ENCODE measurements at regions of chr3 and their contacts with region 1.

Region 1: GRCh38 chr3:3170998-3171397 is 8.5 kb downstream of the CRBN start:
- DNase-seq: peak; percentile 29
- H3K4me3 Mint-ChIP-seq: no peak overlapping the region
- H3K27ac Mint-ChIP-seq: peak overlapping the region; percentile 93
- H3K4me1 Mint-ChIP-seq: peaks cover 60% of the 10 kb centered on the region
- H3K27me3 Mint-ChIP-seq: no peaks in the 10 kb centered on the region

Region 2: GRCh38 chr3:2765002-2765579 is 405.9 kb before region 1 on chr3:
- CTCF ChIA-PET with region 1: no interaction called
- intact Hi-C with region 1: loop called (anchors 1 kb)
- DNase-seq: peak; percentile 34
- H3K4me3 Mint-ChIP-seq: no peak overlapping the region
- H3K27ac Mint-ChIP-seq: no peak overlapping the region
- H3K4me1 Mint-ChIP-seq: no peaks in the 10 kb centered on the region
- H3K27me3 Mint-ChIP-seq: peaks cover 2% of the 10 kb centered on the region

Region 3: DNA sequence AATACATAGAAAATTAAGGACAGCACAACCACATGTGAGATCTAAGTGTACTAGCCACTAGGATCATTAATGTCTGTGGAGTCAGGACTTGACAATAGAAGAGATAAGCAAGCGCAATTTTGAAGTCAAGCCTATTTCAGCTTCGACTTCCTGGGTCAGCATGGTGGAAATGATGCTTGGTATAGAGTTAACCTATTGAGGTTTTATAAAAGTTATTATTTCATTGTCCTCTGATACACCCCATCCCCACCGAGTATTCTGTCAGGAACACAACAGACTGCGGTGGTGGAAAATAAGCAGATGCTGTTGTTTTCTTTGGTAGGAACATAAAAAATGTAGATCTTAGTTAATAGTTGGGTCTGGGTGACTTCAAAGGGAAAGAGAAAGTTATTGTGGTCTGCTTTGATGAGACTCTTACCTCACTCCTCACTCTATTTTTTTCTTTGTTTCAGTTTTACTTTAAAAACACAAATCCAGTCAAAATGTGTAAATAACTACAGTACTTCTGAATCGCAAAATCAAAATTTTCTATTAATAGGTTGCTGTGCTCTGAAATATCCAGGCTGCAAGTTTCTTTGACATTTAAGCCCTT is 142.9 kb before region 1 on chr3:
- CTCF ChIA-PET with region 1: no interaction called
- intact Hi-C with region 1: loop called (anchors 2 kb)
- DNase-seq: no peak
- H3K4me3 Mint-ChIP-seq: no peak overlapping the region
- H3K27ac Mint-ChIP-seq: no peak overlapping the region
- H3K4me1 Mint-ChIP-seq: peaks cover 11% of the 10 kb centered on the region
- H3K27me3 Mint-ChIP-seq: no peaks in the 10 kb centered on the region

Region 4: GRCh38 chr3:3126477-3127431 is 44.2 kb before region 1 on chr3 and contains the start of gene TRNT1:
- CTCF ChIA-PET with region 1: interaction called, 3 read pairs
- intact Hi-C with region 1: loop called (anchors 1 kb)
- DNase-seq: peak; percentile 96
- H3K4me3 Mint-ChIP-seq: peak within 1 kb of the TSS; percentile 97
- H3K27ac Mint-ChIP-seq: peak within 1 kb of the TSS; percentile 98
- H3K4me1 Mint-ChIP-seq: peaks cover 36% of the 10 kb centered on the region
- H3K27me3 Mint-ChIP-seq: no peaks in the 10 kb centered on the region
- total RNA-seq, gene TRNT1: 42.3 to 49.4 TPM

Region 5: DNA sequence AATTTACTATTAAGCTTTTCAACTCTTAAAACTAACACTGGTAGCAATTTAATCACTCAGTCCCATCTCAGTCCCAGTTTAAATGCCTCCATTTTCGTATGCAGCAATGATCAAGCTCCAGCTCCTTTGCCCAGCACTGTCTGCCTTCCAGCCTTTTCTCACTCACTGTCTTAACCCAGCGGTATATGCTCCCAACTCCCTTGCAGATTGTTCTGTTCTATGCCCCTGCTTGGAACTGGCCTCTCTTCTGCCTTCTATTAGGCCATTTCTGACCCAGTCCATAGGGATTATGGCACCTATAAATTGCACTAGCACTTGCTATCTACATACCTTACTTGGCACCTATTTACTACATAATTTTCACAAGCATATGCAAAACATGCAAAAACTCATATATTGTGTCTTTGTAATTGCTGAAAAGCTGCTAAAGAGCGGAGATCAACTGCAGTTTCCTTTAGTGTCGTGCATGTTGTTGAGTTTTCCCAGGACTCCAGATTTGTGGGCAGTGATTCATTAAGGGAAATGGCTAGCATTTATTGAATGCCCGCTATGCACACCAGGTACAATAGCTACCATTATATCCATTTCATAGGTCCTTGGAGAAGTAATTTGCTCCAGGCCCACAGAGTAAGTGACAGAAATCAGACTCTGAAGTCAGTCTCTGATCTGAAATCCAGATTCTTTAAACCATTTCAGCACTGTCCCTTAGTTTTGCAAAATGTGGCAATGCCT is 16.0 kb before region 1 on chr3:
- CTCF ChIA-PET with region 1: interaction called, 11 read pairs
- intact Hi-C with region 1: no loop called
- DNase-seq: no peak
- H3K4me3 Mint-ChIP-seq: no peak overlapping the region
- H3K27ac Mint-ChIP-seq: peak overlapping the region; percentile 72
- H3K4me1 Mint-ChIP-seq: peaks cover 25% of the 10 kb centered on the region
- H3K27me3 Mint-ChIP-seq: no peaks in the 10 kb centered on the region

Region 6: GRCh38 chr3:3160826-3161225 is 10.2 kb before region 1 on chr3:
- CTCF ChIA-PET with region 1: interaction called, 11 read pairs
- intact Hi-C with region 1: no loop called
- DNase-seq: no peak
- H3K4me3 Mint-ChIP-seq: no peak overlapping the region
- H3K27ac Mint-ChIP-seq: peak overlapping the region; percentile 51
- H3K4me1 Mint-ChIP-seq: peaks cover 54% of the 10 kb centered on the region
- H3K27me3 Mint-ChIP-seq: no peaks in the 10 kb centered on the region

Region 7: GRCh38 chr3:3281024-3281423 is 110.0 kb after region 1 on chr3:
- CTCF ChIA-PET with region 1: no interaction called
- intact Hi-C with region 1: no loop called
- DNase-seq: no peak
- H3K4me3 Mint-ChIP-seq: no peak overlapping the region
- H3K27ac Mint-ChIP-seq: no peak overlapping the region
- H3K4me1 Mint-ChIP-seq: peaks cover 3% of the 10 kb centered on the region
- H3K27me3 Mint-ChIP-seq: no peaks in the 10 kb centered on the region